Motor neuron (in vitro differentiated cells): ENCODE measurements at regions of chr5 and their contacts with region 1.

Region 1: GRCh38 chr5:154654486-154655371 is 100.4 kb upstream of the LARP1 start:
- ATAC-seq: peak in 2 of 8 experiments; percentile 49 to 61
- H3K4me3 ChIP-seq: no peak overlapping the region
- H3K27ac ChIP-seq: no peak overlapping the region
- H3K4me1 ChIP-seq: no peaks in the 10 kb centered on the region

Region 2: GRCh38 chr5:154811653-154812365 is 157.1 kb after region 1 on chr5:
- in situ Hi-C with region 1: loop called in 2 of 9 experiments (anchors 25 kb)
- ATAC-seq: peak in 3 of 8 experiments; percentile 60 to 80 (median 75)
- H3K4me3 ChIP-seq: no peak overlapping the region
- H3K27ac ChIP-seq: no peak overlapping the region
- H3K4me1 ChIP-seq: no peaks in the 10 kb centered on the region